ENCODE measurements at regions of chr19 and their contacts with region 1.

Region 1: GRCh38 chr19:771332-771785 is 20.4 kb downstream of the MISP start:
- DNase-seq: no peak
- ATAC-seq: no peak
- H3K4me3 ChIP-seq: no peak overlapping the region
- H3K27ac ChIP-seq: no peak overlapping the region
- H3K4me1 ChIP-seq: no peaks in the 10 kb centered on the region
- H3K27me3 ChIP-seq: peaks cover 0 to 9% (median 0%) of the 10 kb centered on the region in 3 donors
- CTCF ChIP-seq: peak in 3 of 5 experiments; percentile 39 to 48 (median 47)
- POLR2A ChIP-seq: no peak

Region 2: GRCh38 chr19:737581-738093 is 33.7 kb before region 1 on chr19:
- in situ Hi-C with region 1: no loop called
- intact Hi-C with region 1: no loop called
- DNase-seq: no peak
- ATAC-seq: peak in 1 of 2 donors; percentile 30
- H3K4me3 ChIP-seq: no peak overlapping the region
- H3K27ac ChIP-seq: no peak overlapping the region
- H3K4me1 ChIP-seq: no peaks in the 10 kb centered on the region
- H3K27me3 ChIP-seq: no peaks in the 10 kb centered on the region
- CTCF ChIP-seq: peak in 3 of 5 experiments; percentile 30 to 46 (median 38)
- POLR2A ChIP-seq: no peak

Region 3: GRCh38 chr19:925526-926322 is 154.4 kb after region 1 on chr19 and contains the start of gene ARID3A:
- in situ Hi-C with region 1: loop called in 3 of 4 experiments (anchors 5 to 10 kb)
- intact Hi-C with region 1: loop called (anchors 1 kb)
- DNase-seq: peak; percentile 61 to 63
- ATAC-seq: peak; percentile 83 to 85
- H3K4me3 ChIP-seq: peak within 1 kb of the TSS; percentile 86 to 96 (median 93)
- H3K27ac ChIP-seq: peak within 1 kb of the TSS; percentile 81 to 91 (median 86)
- H3K4me1 ChIP-seq: peaks cover 5 to 19% of the 10 kb centered on the region in 2 donors
- H3K27me3 ChIP-seq: peaks cover 8% of the 10 kb centered on the region in 3 donors
- CTCF ChIP-seq: peak in 3 of 5 experiments; percentile 2 to 18 (median 16)
- POLR2A ChIP-seq: peak; percentile 59 to 87
- total RNA-seq, gene ARID3A: 1.8 to 9.9 (median 7.8) TPM

Region 4: DNA sequence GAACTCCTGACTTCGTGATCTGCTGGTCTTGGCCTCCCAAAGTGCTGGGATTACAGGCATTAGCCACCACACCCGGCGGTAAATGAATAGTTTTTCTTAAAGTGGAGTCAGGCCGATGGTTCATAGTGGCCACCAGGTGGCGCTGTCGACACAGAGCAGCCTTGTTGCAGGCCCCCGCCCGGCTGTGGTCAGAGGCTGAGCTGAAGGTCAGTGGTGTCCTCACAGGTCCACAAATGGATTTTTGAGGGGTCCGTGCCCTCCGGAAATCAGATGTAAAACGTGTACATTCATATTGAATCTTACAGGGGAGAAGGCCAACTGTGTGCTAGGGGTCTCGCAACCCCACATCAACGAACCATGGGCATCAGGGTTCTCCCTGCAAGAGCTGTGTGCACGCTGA is 199.3 kb after region 1 on chr19:
- in situ Hi-C with region 1: loop called in 1 of 4 experiments (anchors 10 kb)
- intact Hi-C with region 1: no loop called
- DNase-seq: no peak
- ATAC-seq: no peak
- H3K4me3 ChIP-seq: no peak overlapping the region
- H3K27ac ChIP-seq: no peak overlapping the region
- H3K4me1 ChIP-seq: no peaks in the 10 kb centered on the region
- H3K27me3 ChIP-seq: peaks cover 0 to 5% (median 0%) of the 10 kb centered on the region in 3 donors
- CTCF ChIP-seq: peak in 4 of 5 experiments; percentile 23 to 68 (median 53)
- POLR2A ChIP-seq: no peak

Region 5: DNA sequence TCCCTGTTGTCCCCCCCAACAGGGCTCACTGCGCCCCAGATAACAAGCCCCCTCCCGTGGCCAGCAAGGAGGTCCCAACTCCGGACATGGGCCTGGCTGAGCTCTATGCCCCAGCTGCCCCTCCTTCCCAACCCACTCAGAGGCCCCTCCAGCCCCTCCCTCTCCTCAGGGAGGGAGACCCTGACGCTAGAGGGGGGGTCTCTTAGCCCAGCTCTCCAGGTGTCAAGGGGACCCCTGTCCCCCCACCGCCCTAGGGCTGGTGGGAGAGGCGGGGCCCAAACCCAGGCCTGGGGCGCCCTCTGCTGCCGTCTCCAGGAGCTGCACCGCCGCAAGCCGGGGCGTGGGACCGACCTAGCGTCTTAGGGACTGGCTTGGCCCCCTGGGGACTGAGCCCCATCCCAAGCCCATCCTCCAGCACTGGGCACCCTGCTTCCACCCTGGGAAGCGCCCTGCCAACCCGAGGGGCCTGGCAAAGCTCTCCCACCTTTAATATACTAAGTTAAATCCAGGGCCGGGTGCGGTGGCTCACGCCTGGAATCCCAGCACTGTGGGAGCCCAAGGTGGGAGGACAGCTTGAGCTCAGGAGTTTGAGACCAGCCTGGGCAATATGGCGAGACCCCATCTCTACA is 230.3 kb after region 1 on chr19:
- in situ Hi-C with region 1: no loop called
- intact Hi-C with region 1: loop called (anchors 2 kb)
- DNase-seq: no peak
- ATAC-seq: peak; percentile 46 to 58
- H3K4me3 ChIP-seq: no peak overlapping the region
- H3K27ac ChIP-seq: no peak overlapping the region
- H3K4me1 ChIP-seq: no peaks in the 10 kb centered on the region
- H3K27me3 ChIP-seq: peaks cover 54 to 67% (median 54%) of the 10 kb centered on the region in 3 donors
- CTCF ChIP-seq: peak; percentile 82 to 92 (median 85)
- POLR2A ChIP-seq: no peak

Measured in gastrocnemius medialis (tissue), 4 donors.